ENCODE measurements at regions of chr17 and their contacts with region 1.

Region 1: GRCh38 chr17:39365242-39365641 is 36.2 kb downstream of the FBXL20 start:
- DNase-seq: no peak
- H3K4me3 ChIP-seq: no peak overlapping the region
- H3K27ac ChIP-seq: no peak overlapping the region
- H3K4me1 ChIP-seq: no peaks in the 10 kb centered on the region
- H3K27me3 ChIP-seq: no peaks in the 10 kb centered on the region
- CTCF ChIP-seq: no peak
- POLR2A ChIP-seq: no peak

Region 2: GRCh38 chr17:39352511-39352910 is 12.7 kb before region 1 on chr17:
- CTCF ChIA-PET with region 1: interaction called, 12 read pairs
- POLR2A ChIA-PET with region 1: no interaction called
- dilution Hi-C with region 1: no loop called
- intact Hi-C with region 1: no loop called
- DNase-seq: peak; percentile 21
- H3K4me3 ChIP-seq: no peak overlapping the region
- H3K27ac ChIP-seq: no peak overlapping the region
- H3K4me1 ChIP-seq: peaks cover 14% of the 10 kb centered on the region
- H3K27me3 ChIP-seq: no peaks in the 10 kb centered on the region
- CTCF ChIP-seq: no peak
- POLR2A ChIP-seq: no peak

Region 3: GRCh38 chr17:39376434-39376833 is 11.2 kb after region 1 on chr17:
- CTCF ChIA-PET with region 1: no interaction called
- POLR2A ChIA-PET with region 1: no interaction called
- dilution Hi-C with region 1: no loop called
- intact Hi-C with region 1: no loop called
- DNase-seq: no peak
- H3K4me3 ChIP-seq: no peak overlapping the region
- H3K27ac ChIP-seq: no peak overlapping the region
- H3K4me1 ChIP-seq: no peaks in the 10 kb centered on the region
- H3K27me3 ChIP-seq: no peaks in the 10 kb centered on the region
- CTCF ChIP-seq: no peak
- POLR2A ChIP-seq: no peak